ENCODE measurements at regions of chr2 and their contacts with region 1.

Region 1: GRCh38 chr2:20962939-20963557 is 80.8 kb downstream of the APOB start:
- DNase-seq: peak; percentile 69
- ATAC-seq: peak; percentile 53 to 78

Region 2: GRCh38 chr2:20661067-20661980 is 301.7 kb before region 1 on chr2:
- intact Hi-C with region 1: loop called (anchors 2 kb)
- DNase-seq: peak; percentile 66
- ATAC-seq: peak; percentile 75 to 80

Region 3: DNA sequence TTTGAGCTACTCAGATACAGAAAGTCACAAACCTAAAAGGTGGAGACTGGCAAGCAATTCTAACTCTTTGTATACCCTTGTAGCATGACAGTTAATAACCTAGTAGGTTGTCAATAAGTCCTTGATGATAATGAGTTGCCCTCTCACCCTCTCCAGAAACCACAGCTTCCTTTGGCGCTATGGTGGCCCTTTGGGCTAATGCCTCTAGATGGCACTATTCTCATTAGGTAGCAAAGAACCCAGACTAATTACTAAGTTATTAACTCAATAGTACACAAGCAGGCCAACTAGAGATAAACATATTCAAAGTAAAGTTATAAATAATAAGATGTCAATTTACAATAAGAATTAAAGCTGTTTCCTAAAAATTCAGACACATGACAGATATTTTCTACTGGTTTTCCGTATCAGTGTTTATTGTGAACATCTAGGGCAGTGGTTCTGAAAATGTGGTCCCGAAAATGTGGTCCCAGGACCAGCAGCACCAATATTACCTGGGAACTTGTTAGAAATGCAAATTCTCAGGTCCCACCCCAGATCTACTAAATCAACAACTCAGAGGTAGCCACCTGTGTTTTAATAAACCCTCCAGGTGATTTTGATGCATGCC is 181.3 kb before region 1 on chr2:
- intact Hi-C with region 1: loop called (anchors 5 to 10 kb)
- DNase-seq: no peak
- ATAC-seq: no peak

Region 4: GRCh38 chr2:21501376-21502027 is 538.5 kb after region 1 on chr2:
- intact Hi-C with region 1: no loop called
- DNase-seq: no peak
- ATAC-seq: no peak